Heart left ventricle (tissue), 16 donors: ENCODE measurements at regions of chr7 and their contacts with region 1.

Region 1: GRCh38 chr7:7182156-7183060 is at the start of gene C1GALT1:
- DNase-seq: peak; percentile 98 to 99 (median 98)
- ATAC-seq: peak; percentile 98 to 99 (median 98)
- H3K4me3 ChIP-seq: peak within 1 kb of the TSS; percentile 62 to 97 (median 92)
- H3K27ac ChIP-seq: peak within 1 kb of the TSS; percentile 87 to 99 (median 96)
- H3K4me1 ChIP-seq: peaks cover 0 to 39% (median 25%) of the 10 kb centered on the region in 12 donors
- H3K27me3 ChIP-seq: no peaks in the 10 kb centered on the region
- CTCF ChIP-seq: peak in 11 of 12 donors; percentile 13 to 57 (median 39)
- POLR2A ChIP-seq: peak in 1 of 2 donors; percentile 96
- total RNA-seq, gene C1GALT1: 16.5 to 36.4 (median 21.3) TPM

Region 2: DNA sequence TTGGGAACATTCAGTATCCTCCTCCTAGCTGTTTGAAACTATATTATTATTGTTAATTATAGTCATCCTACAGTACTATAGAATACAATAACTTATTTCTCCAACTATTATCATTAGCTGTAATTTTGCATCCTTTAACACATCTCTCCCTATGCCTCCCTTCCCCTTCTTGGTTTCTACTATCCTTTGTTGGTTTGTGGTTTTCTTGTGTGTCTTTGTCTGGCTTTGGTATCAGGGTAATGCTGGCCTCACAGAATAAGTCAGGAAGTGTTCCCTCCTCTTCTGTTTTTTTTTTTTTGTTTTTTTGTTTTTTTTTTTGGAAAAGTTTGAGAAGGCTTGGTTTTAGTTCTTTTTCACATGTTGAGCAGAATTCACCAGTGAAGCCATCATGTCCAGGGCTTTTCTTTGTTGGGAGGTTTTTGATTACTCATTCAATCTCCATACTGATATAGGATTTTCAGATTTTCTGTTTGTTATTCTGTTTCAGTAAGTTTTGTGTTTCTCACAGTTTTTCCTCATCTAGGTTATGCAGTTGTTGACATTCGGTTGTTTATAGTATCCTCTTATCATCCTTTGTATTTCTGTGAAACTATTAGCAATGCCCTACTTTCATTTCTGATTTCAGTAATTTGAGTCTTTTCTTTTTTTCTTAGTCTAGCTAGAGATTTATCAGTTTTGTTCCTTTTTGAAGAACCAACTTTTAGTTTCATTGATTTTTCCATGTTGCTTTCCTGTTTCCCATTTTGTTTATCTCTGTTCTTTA is 21.6 kb after region 1 on chr7:
- intact Hi-C with region 1: no loop called
- DNase-seq: no peak
- ATAC-seq: no peak
- H3K4me3 ChIP-seq: no peak overlapping the region
- H3K27ac ChIP-seq: no peak overlapping the region
- H3K4me1 ChIP-seq: peaks cover 0 to 40% (median 6%) of the 10 kb centered on the region in 12 donors
- H3K27me3 ChIP-seq: no peaks in the 10 kb centered on the region
- CTCF ChIP-seq: no peak
- POLR2A ChIP-seq: no peak

Region 3: GRCh38 chr7:7257899-7258692 is 75.7 kb after region 1 on chr7:
- intact Hi-C with region 1: loop called in 5 of 10 experiments (anchors 5 to 10 kb)
- DNase-seq: no peak
- ATAC-seq: peak in 1 of 4 donors; percentile 37
- H3K4me3 ChIP-seq: peak overlapping the region in 1 of 12 donors; percentile 45
- H3K27ac ChIP-seq: peak overlapping the region in 1 of 12 donors; percentile 87
- H3K4me1 ChIP-seq: peaks cover 0 to 39% (median 5%) of the 10 kb centered on the region in 12 donors
- H3K27me3 ChIP-seq: no peaks in the 10 kb centered on the region
- CTCF ChIP-seq: no peak
- POLR2A ChIP-seq: no peak

Region 4: DNA sequence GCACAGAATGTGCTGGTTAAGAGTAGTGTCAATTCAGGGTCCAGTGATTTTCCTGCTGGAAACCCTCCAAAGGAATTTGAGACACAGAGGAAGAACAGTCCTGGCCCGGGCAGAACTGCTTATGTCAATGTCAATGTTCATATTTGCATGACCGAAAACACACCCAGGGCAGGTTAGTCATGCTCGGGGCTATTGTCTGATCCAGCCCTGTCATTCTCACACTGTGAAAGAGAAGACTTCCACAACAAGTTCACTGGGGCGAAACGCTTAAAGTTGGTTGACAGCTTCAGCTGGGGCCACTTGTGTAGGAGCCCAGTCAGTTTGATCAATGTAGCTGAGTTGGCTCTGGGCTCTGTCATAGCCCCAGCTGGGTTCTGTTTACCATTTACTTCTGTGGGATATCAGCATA is 139.3 kb after region 1 on chr7:
- intact Hi-C with region 1: no loop called
- DNase-seq: no peak
- ATAC-seq: no peak
- H3K4me3 ChIP-seq: no peak overlapping the region
- H3K27ac ChIP-seq: no peak overlapping the region
- H3K4me1 ChIP-seq: no peaks in the 10 kb centered on the region
- H3K27me3 ChIP-seq: no peaks in the 10 kb centered on the region
- CTCF ChIP-seq: no peak
- POLR2A ChIP-seq: no peak

Region 5: GRCh38 chr7:7512861-7513597 is 330.6 kb after region 1 on chr7:
- intact Hi-C with region 1: no loop called
- DNase-seq: no peak
- ATAC-seq: peak in 1 of 4 donors; percentile 15
- H3K4me3 ChIP-seq: no peak overlapping the region
- H3K27ac ChIP-seq: no peak overlapping the region
- H3K4me1 ChIP-seq: no peaks in the 10 kb centered on the region
- H3K27me3 ChIP-seq: no peaks in the 10 kb centered on the region
- CTCF ChIP-seq: no peak
- POLR2A ChIP-seq: no peak

Region 6: GRCh38 chr7:7566651-7567611 is 384.5 kb after region 1 on chr7 and contains the start of gene MIOS:
- intact Hi-C with region 1: loop called in 3 of 10 experiments (anchors 10 kb)
- DNase-seq: peak; percentile 90 to 95 (median 93)
- ATAC-seq: peak; percentile 95 to 99 (median 98)
- H3K4me3 ChIP-seq: peak within 1 kb of the TSS; percentile 72 to 97 (median 86)
- H3K27ac ChIP-seq: peak within 1 kb of the TSS; percentile 82 to 97 (median 93)
- H3K4me1 ChIP-seq: peaks cover 0 to 45% (median 19%) of the 10 kb centered on the region in 12 donors
- H3K27me3 ChIP-seq: no peaks in the 10 kb centered on the region
- CTCF ChIP-seq: peak in 1 of 12 donors; percentile 8
- POLR2A ChIP-seq: peak; percentile 21 to 85
- total RNA-seq, gene MIOS: 21.0 to 30.8 (median 22.3) TPM

Region 7: DNA sequence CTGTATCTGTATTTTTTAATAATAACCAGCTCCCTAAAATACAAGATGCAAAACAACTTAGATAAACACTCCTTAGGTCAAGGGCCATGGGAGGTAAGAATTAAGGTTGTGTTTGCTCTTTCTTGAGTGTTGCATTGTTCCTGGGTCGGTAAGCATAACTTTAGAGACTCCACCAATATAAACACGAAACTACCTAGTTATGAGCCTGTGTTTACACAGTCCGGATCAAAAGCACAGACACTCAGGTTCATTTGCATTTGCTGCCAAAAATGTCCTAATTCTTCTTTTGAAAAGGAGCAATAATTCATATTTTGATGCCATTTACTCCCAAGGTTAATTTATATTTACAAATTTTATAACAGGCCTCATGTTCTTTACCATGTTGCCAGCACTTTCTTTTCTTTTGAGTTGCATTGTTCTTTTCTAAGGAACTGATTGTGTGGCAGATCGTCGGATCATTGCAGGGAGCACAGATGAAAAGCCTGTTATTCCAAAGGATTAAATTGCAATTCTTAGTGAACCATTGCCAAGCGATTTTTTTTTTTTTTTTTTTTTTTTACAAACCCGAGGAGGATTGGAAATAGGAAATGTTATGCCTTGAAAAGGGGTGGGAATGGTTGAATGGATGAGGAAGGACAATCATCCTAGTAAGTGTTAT is 740.4 kb after region 1 on chr7:
- intact Hi-C with region 1: no loop called
- DNase-seq: no peak
- ATAC-seq: no peak
- H3K4me3 ChIP-seq: no peak overlapping the region
- H3K27ac ChIP-seq: no peak overlapping the region
- H3K4me1 ChIP-seq: no peaks in the 10 kb centered on the region
- H3K27me3 ChIP-seq: no peaks in the 10 kb centered on the region
- CTCF ChIP-seq: no peak
- POLR2A ChIP-seq: no peak